ENCODE measurements at regions of chr3 and their contacts with region 1.

Region 1: DNA sequence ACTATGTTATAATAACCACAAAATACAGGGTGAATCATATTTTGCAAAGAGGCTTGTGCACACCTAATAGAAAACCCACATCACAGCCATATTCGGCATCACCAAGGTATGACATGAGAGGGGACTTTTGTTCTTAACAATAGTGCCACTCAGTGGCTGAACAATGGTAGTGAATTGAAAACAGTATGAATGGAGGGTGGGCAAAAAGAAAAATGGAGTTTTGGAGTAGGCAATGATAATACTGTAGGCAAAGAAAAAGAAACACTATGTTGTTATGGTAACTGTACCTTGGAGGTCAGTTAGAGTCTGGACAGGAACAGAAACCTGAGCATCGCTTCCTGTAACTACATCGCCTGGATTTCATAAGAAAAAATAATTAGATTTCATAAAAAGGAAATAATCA is 348.6 kb downstream of the PLCL2 start:
- DNase-seq: peak; percentile 35
- CTCF ChIP-seq: peak; percentile 70

Region 2: GRCh38 chr3:16600780-16601539 is 632.4 kb before region 1 on chr3:
- in situ Hi-C with region 1: loop called (anchors 10 kb)
- DNase-seq: peak; percentile 68
- CTCF ChIP-seq: peak; percentile 75

Region 3: DNA sequence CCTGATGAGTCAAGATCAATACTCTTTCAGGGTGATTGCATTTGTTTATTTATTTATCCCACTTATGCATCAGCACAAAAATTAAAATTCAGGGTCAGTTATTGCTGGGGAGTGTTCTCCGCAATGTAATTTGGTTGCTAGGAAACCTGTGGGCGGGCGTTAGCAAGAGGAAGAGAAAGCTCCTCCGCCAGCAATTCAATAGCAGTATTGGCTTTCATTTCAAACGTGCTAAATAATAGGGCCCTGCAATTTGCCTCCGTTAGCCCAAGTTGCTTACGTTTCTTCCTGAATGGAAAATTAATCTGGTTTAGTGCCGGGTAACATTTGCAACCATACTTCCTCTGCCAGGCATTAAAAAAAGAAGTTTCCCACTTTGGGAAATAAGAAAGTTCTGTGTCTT is 384.2 kb before region 1 on chr3:
- in situ Hi-C with region 1: loop called (anchors 25 kb)
- DNase-seq: peak; percentile 27
- CTCF ChIP-seq: no peak

Region 4: DNA sequence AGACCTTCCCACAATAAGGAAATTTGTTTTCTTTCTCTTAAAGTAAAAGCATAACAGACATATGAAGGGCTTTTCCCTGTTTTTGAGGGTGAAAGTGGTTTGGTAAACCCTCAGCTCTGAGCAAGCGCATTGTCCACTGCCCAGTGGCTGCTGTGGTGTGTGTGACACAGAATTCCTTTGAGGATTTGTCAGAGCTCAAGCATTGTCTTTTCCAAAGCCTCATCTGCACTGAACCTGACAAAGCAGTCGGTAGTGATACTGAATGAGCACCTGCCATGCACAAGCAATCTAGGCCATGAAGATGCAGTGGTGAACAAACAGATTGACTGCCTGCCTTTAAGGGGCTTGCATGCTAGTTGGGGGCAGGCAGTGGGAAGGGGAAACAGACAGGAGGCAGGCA is 220.3 kb before region 1 on chr3:
- in situ Hi-C with region 1: no loop called
- DNase-seq: no peak
- CTCF ChIP-seq: no peak

Region 5: GRCh38 chr3:17151598-17152373 is 81.6 kb before region 1 on chr3:
- in situ Hi-C with region 1: no loop called
- DNase-seq: peak; percentile 87
- CTCF ChIP-seq: no peak

Region 6: DNA sequence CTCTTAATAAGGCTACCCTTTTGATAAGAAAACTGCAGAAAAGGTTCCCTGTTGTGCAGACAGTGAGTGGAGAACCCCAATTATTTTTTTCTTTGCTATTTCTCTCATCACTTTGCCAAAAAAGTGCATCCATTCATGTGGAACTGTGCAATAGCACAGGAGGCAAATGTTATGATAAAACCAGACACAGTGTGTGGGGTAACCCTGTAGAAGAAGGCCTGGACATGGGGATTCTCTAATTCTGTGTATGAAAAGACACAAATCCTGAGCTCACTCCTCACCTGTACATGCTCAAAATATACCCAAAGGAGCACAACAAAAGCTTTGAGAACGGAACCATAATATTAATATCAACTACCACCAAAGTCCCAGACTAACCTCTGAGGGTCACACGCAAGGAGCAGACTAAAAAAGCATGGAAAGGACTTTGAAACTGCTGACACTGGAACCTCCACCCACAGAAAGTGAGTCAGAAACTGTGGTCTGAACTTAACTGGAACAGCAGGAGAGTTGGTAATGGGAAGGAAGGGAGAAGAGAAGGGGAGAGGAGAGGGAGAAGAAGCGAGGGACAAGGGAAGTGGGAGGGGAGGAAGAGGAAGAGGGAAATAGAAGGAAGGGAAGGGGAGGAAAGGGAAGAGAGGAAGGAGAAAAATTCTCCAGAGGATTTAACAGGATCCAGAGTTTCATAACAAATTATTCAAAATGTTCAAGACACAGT is 209.1 kb after region 1 on chr3:
- in situ Hi-C with region 1: no loop called
- DNase-seq: no peak
- CTCF ChIP-seq: no peak

Measured in GM13977 (cell line).